GM12878 (cell line): ENCODE measurements at regions of chr10 and their contacts with region 1.

Region 1: DNA sequence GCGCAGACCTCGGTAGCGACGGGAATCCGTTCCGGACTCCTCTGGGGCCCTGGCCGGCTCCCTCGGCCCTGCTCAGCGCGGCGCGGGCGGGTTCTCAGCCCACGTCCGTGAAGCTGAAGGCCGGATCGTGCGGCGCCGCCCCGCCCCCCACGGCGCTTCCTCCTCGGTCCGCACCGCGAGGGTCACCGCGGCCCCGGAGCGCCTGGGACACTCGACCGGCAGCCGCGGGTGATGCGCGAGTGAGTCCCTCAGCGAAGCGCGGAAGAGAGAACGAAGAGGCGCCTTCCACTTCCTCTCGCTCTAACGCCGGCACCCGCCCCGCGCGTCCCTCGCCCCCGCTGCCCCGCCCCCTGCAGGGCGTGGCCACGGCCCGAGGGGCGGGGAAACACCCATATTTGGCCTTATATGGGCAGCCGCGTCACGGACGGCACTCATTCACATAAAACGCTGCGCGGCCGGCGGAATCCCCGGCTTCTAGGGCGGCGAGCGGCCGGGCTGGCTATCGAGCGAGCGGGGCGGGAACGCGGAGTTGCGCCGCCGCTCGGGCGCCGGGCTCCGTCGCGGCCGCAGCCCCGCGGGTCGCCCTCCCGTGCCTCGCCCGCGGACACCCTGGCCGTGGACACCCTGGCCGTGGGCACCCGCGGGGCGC is at the start of gene DUSP5:
- DNase-seq: peak; percentile 75
- ATAC-seq: peak; percentile 51
- H3K4me3 ChIP-seq: peak within 1 kb of the TSS; percentile 95
- H3K27ac ChIP-seq: peak within 1 kb of the TSS; percentile 91
- H3K4me1 ChIP-seq: peaks cover 26% of the 10 kb centered on the region
- H3K27me3 ChIP-seq: no peaks in the 10 kb centered on the region
- CTCF ChIP-seq: no peak
- EP300 ChIP-seq: peak in 1 of 2 experiments; percentile 13; a peak in 2 of 4 replicates
- POLR2A ChIP-seq: peak; percentile 90
- RAD21 ChIP-seq: no peak
- polyA plus RNA-seq, gene DUSP5: 7.5 to 14.6 TPM

Region 2: GRCh38 chr10:109823196-109823595 is 674.4 kb before region 1 on chr10:
- CTCF ChIA-PET with region 1: no interaction called
- POLR2A ChIA-PET with region 1: no interaction called
- RAD21 ChIA-PET with region 1: no interaction called
- SMC1A ChIA-PET with region 1: no interaction called
- in situ Hi-C with region 1: no loop called
- intact Hi-C with region 1: no loop called
- DNase-seq: no peak
- ATAC-seq: no peak
- H3K4me3 ChIP-seq: no peak overlapping the region
- H3K27ac ChIP-seq: no peak overlapping the region
- H3K4me1 ChIP-seq: no peaks in the 10 kb centered on the region
- H3K27me3 ChIP-seq: no peaks in the 10 kb centered on the region
- CTCF ChIP-seq: no peak
- EP300 ChIP-seq: no peak
- POLR2A ChIP-seq: no peak
- RAD21 ChIP-seq: no peak

Region 3: GRCh38 chr10:110304780-110305421 is 192.7 kb before region 1 on chr10 and contains the start of gene SMNDC1:
- CTCF ChIA-PET with region 1: interaction called, 29 read pairs
- POLR2A ChIA-PET with region 1: interaction called, 10 read pairs
- RAD21 ChIA-PET with region 1: interaction called, 28 read pairs
- SMC1A ChIA-PET with region 1: interaction called, 42 read pairs
- in situ Hi-C with region 1: no loop called
- intact Hi-C with region 1: no loop called
- DNase-seq: peak; percentile 89
- ATAC-seq: peak; percentile 91
- H3K4me3 ChIP-seq: peak within 1 kb of the TSS; percentile 81
- H3K27ac ChIP-seq: peak within 1 kb of the TSS; percentile 88
- H3K4me1 ChIP-seq: peaks cover 7% of the 10 kb centered on the region; the same call in 1 of the 2 replicates
- H3K27me3 ChIP-seq: no peaks in the 10 kb centered on the region
- CTCF ChIP-seq: no peak
- EP300 ChIP-seq: no peak
- POLR2A ChIP-seq: peak; percentile 88
- RAD21 ChIP-seq: no peak
- polyA plus RNA-seq, gene SMNDC1: 10.1 to 12.9 TPM

Region 4: DNA sequence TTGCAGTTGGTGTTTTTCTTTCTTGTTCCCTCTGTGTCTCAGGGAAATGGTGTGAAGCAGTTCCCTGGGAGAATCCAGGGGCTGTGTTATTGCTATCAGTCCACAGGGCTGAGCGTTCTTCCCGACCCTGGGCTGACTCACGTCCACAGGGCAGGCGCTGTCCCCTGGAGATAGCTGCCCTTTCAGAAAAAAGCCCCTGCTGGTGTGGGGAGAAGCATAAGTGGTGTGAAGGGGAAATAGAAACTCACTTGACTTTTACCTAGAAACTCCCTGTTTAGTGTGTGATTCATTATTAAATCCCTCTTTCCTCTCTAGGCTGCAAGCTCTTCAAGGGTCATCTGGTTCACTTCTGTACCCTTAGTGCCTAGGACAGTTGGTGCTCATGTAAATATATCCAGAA is 129.6 kb before region 1 on chr10:
- CTCF ChIA-PET with region 1: no interaction called
- POLR2A ChIA-PET with region 1: interaction called, 14 read pairs
- RAD21 ChIA-PET with region 1: interaction called, 8 read pairs
- SMC1A ChIA-PET with region 1: interaction called, 3 read pairs
- in situ Hi-C with region 1: no loop called
- intact Hi-C with region 1: no loop called
- DNase-seq: no peak
- ATAC-seq: peak; percentile 86
- H3K4me3 ChIP-seq: no peak overlapping the region
- H3K27ac ChIP-seq: no peak overlapping the region; the same call in 1 of the 2 replicates
- H3K4me1 ChIP-seq: peaks cover 29% of the 10 kb centered on the region
- H3K27me3 ChIP-seq: no peaks in the 10 kb centered on the region
- CTCF ChIP-seq: no peak
- EP300 ChIP-seq: peak in 1 of 2 experiments; percentile 43; a peak in 1 of 4 replicates
- POLR2A ChIP-seq: no peak
- RAD21 ChIP-seq: no peak

Region 5: DNA sequence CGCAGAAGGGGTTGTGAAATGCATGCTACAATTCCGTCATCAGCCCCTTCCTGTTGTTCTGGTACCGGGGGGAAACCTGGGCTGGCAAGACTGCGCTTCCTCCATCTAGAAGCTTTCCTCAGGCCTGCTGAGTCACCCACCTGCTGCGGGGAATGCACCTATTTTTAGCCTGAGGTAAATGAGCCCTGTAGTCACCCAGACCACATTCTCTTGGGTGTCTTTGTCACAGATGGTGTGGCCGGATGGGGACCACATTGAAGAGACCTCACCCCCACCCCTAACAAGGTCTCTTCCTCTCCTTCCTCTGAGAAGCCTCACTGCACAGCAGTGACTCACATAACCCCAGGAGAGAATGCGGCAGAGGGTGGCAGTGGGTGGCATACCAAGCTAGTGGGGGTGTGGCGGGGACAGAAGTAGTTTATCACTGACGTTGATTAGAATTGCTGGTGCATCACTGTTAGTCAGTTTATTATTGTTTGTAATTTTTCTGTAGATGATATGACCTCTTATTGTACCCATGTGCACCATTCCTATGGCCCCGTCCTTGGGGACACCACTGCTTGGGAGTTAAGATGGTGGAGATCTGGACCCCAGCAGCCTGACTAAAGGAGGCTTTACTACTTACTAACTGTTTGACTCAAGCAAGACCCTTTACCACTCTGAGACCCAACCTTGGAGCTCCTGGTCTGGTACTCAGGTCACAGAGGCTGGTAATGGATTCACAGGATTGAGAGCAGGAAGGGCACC is 82.8 kb before region 1 on chr10:
- CTCF ChIA-PET with region 1: interaction called, 16 read pairs
- POLR2A ChIA-PET with region 1: interaction called, 94 read pairs
- RAD21 ChIA-PET with region 1: interaction called, 181 read pairs
- SMC1A ChIA-PET with region 1: interaction called, 154 read pairs
- in situ Hi-C with region 1: no loop called
- intact Hi-C with region 1: loop called (anchors 1 kb)
- DNase-seq: peak; percentile 99
- ATAC-seq: peak; percentile 83
- H3K4me3 ChIP-seq: no peak overlapping the region
- H3K27ac ChIP-seq: peak overlapping the region; percentile 93
- H3K4me1 ChIP-seq: peaks cover 69% of the 10 kb centered on the region
- H3K27me3 ChIP-seq: no peaks in the 10 kb centered on the region
- CTCF ChIP-seq: no peak
- EP300 ChIP-seq: peak; percentile 97 to 99
- POLR2A ChIP-seq: peak; percentile 49; the same call in 1 of the 2 replicates
- RAD21 ChIP-seq: peak; percentile 38

Region 6: DNA sequence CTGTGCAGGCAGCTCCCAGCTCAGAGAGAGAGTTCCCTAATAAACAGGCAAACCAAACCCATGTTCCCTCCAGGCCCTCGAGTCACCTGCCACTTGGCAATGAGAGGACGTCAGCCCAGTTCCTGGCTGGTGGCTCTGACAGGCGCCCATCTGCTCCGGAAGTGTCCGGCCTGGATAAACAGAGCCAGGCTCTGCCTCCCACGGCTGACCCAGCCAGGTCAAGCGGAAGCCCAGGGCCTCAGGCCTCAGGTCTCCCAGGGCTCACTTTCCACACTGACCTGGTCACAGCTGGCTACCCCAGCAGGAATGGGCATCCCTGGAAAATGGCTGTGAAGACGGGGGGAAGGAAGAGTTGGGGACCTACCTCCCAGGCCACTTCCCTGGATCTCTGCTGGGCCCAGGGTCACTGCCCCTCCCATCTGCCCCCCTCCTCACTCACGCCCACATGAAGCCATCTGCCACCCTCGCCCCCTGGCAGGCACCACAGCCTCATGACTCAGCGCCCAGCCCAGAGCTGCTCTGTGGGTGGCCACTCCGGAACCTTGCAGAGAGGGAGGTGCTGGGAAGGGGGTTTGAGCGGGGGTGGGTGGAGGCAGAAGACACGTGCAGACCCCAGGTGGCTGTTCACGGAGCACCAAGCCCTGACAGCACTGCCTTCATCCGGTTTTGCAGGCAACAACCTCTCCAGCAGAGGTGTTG is 37.3 kb before region 1 on chr10:
- CTCF ChIA-PET with region 1: interaction called, 3 read pairs
- POLR2A ChIA-PET with region 1: interaction called, 3 read pairs
- RAD21 ChIA-PET with region 1: no interaction called
- SMC1A ChIA-PET with region 1: interaction called, 4 read pairs
- in situ Hi-C with region 1: no loop called
- intact Hi-C with region 1: loop called (anchors 5 kb)
- DNase-seq: no peak
- ATAC-seq: no peak
- H3K4me3 ChIP-seq: no peak overlapping the region
- H3K27ac ChIP-seq: no peak overlapping the region
- H3K4me1 ChIP-seq: peaks cover 44% of the 10 kb centered on the region
- H3K27me3 ChIP-seq: no peaks in the 10 kb centered on the region
- CTCF ChIP-seq: no peak
- EP300 ChIP-seq: no peak
- POLR2A ChIP-seq: no peak
- RAD21 ChIP-seq: no peak

Region 7: DNA sequence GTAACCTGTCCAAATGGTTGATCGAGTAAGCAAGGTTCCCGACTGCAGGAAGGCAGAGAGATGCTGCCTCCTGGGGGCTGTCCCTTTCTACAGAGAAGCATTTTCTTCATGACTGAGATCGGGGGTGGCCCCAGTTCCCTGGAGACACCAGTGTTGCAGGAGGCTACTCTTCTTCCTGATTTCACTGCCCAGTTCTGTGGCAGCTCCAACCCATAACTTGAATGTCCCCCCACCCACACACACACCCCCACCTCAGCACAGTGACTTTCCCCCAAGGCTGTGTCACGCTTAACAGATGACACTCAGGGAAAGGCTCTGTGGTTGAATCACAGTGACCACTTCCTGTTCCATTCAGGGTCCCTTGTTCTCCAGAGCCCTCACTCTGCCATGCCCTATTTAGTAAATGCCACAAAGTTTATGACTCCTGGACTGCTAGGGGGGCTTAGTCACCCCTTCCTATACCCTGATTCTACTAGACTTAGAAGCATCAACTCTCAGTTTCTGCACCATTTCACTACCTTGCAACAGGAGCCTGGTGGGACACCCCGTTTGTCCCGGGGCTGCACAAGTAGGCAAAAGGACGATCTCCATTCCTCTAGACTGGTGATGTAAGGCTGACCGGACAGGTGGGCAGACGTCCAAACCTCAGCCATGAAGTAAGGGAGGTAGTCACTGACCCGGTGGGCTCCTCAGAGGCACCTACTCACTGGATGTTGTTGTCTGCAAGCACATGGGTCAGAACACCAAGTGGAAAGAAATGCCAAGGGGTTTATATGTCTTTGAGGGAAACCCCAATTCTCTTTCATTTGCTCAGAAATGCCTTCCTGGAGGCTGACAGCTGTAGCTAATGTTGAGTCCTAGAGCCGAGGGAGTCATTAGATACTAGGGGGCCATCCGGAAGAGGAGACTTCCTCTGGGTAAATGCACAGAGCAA is 38.7 kb after region 1 on chr10:
- CTCF ChIA-PET with region 1: interaction called, 6 read pairs
- POLR2A ChIA-PET with region 1: interaction called, 15 read pairs
- RAD21 ChIA-PET with region 1: interaction called, 34 read pairs
- SMC1A ChIA-PET with region 1: interaction called, 26 read pairs
- in situ Hi-C with region 1: no loop called
- intact Hi-C with region 1: no loop called
- DNase-seq: peak; percentile 87
- ATAC-seq: peak; percentile 91
- H3K4me3 ChIP-seq: no peak overlapping the region; the same call in 1 of the 2 replicates
- H3K27ac ChIP-seq: peak overlapping the region; percentile 67
- H3K4me1 ChIP-seq: peaks cover 29% of the 10 kb centered on the region
- H3K27me3 ChIP-seq: no peaks in the 10 kb centered on the region
- CTCF ChIP-seq: peak; percentile 28 to 48 (median 37); a peak in 4 of 6 replicates
- EP300 ChIP-seq: peak; percentile 84 to 85; a peak in 3 of 4 replicates
- POLR2A ChIP-seq: no peak
- RAD21 ChIP-seq: peak; percentile 68

Region 8: DNA sequence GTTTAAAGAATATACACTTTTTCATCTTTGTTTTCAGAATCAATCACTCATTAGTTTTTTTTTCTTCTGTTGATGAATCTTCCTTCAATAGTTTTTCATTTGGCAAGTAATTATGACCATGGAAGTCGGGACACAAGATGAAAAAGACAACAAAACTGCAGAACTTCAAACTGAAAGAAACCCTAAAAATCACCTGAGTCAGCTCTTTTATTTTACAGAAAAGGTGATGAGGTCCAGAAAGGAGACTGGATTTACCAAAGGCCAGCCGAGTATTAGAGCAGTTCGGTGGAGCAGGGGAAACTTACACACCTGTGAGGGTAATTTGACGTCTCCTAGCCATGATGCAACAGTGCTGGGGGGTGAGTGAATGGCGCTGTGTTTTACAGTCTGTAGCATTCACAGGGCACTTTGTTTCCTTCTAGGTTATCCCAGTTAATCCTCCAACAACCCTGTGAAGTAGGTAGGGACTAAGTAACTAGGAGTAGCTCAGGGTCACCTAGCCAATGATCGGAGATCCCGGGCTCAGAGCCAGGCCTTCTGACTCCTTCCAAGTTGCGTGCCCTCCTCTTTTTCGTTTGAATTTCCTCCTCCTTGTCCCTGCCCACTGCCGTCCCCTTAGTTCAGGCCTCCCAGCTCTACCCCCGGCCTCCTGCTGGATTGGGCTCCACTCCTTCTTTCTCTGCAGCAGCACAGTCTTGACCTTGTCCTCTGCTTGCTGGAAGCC is 160.6 kb after region 1 on chr10:
- CTCF ChIA-PET with region 1: no interaction called
- POLR2A ChIA-PET with region 1: no interaction called
- RAD21 ChIA-PET with region 1: no interaction called
- SMC1A ChIA-PET with region 1: no interaction called
- in situ Hi-C with region 1: no loop called
- intact Hi-C with region 1: no loop called
- DNase-seq: no peak
- ATAC-seq: no peak
- H3K4me3 ChIP-seq: no peak overlapping the region
- H3K27ac ChIP-seq: no peak overlapping the region
- H3K4me1 ChIP-seq: peaks cover 3% of the 10 kb centered on the region
- H3K27me3 ChIP-seq: no peaks in the 10 kb centered on the region
- CTCF ChIP-seq: no peak
- EP300 ChIP-seq: no peak
- POLR2A ChIP-seq: no peak
- RAD21 ChIP-seq: no peak

Region 9: GRCh38 chr10:110871298-110872084 is 373.9 kb after region 1 on chr10 and contains the start of gene PDCD4:
- CTCF ChIA-PET with region 1: no interaction called
- POLR2A ChIA-PET with region 1: no interaction called
- RAD21 ChIA-PET with region 1: no interaction called
- SMC1A ChIA-PET with region 1: no interaction called
- in situ Hi-C with region 1: no loop called
- intact Hi-C with region 1: loop called (anchors 10 kb)
- DNase-seq: peak; percentile 86
- ATAC-seq: peak; percentile 78
- H3K4me3 ChIP-seq: peak within 1 kb of the TSS; percentile 65
- H3K27ac ChIP-seq: peak within 1 kb of the TSS; percentile 99
- H3K4me1 ChIP-seq: peaks cover 48% of the 10 kb centered on the region
- H3K27me3 ChIP-seq: no peaks in the 10 kb centered on the region
- CTCF ChIP-seq: no peak
- EP300 ChIP-seq: no peak
- POLR2A ChIP-seq: peak; percentile 96
- RAD21 ChIP-seq: no peak
- polyA plus RNA-seq, gene PDCD4: 101 to 138 TPM